ENCODE measurements at regions of chr14 and their contacts with region 1.

Region 1: GRCh38 chr14:66495218-66496098 is 9.3 kb downstream of the CCDC196 start:
- DNase-seq: no peak
- ATAC-seq: peak; percentile 70
- H3K4me3 Mint-ChIP-seq: no peak overlapping the region
- H3K27ac Mint-ChIP-seq: no peak overlapping the region
- H3K4me1 Mint-ChIP-seq: peaks cover 14% of the 10 kb centered on the region
- H3K27me3 Mint-ChIP-seq: no peaks in the 10 kb centered on the region
- CTCF ChIP-seq: peak; percentile 21

Region 2: DNA sequence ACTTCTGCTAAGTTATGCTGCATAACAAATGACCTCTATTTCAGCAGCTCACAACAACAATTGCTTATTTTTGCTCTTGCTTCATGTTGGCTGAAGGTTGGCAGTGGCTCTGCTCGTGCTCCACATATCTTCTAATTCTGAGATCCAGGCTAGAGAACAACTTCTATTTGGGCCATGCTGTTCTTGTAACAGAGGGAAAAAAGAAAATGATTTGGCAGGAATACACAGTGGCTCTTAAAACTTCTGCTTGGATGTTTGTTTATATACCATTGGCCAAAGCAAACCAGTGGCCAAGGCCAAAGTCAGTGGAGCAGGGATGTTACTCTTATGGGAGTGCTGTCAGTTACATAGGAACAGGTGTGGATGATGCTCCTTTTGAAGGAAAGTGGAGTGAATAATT is 44.6 kb after region 1 on chr14:
- CTCF ChIA-PET with region 1: no interaction called
- POLR2A ChIA-PET with region 1: no interaction called
- intact Hi-C with region 1: loop called (anchors 5 kb)
- DNase-seq: no peak
- ATAC-seq: no peak
- H3K4me3 Mint-ChIP-seq: no peak overlapping the region
- H3K27ac Mint-ChIP-seq: no peak overlapping the region
- H3K4me1 Mint-ChIP-seq: peaks cover 9% of the 10 kb centered on the region
- H3K27me3 Mint-ChIP-seq: no peaks in the 10 kb centered on the region
- CTCF ChIP-seq: no peak

Region 3: DNA sequence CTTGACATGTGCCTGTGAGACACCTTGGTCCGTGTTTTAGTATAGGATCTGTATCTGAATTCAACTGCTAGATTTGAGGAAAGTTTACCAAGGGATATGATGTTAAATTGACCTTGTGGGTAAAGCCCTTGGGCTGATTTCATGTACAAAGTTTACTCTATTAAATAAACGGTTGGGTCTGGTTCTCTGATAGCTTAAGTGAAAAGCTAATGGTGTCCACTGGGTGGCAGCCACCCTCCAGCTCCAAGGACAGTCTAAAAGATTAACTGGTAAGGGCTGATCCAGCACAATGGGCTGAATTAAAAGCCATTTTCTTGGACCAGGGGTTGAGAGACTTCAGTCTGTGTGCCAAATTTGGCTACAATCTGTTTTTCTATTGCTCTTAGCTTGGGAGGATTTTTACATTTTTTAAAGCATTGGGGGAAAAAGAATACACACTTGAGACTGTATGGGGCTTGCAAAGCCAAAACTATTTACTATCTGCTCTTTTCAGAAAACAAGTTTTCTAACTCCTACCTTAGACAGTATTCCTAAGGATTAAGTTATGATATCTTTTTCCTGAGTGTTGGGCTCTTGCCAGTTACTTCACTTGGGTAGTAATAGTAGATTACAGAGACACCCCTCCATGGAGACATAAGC is 129.0 kb after region 1 on chr14:
- CTCF ChIA-PET with region 1: interaction called, 6 read pairs
- POLR2A ChIA-PET with region 1: no interaction called
- intact Hi-C with region 1: loop called (anchors 2 kb)
- DNase-seq: no peak
- ATAC-seq: peak; percentile 45
- H3K4me3 Mint-ChIP-seq: no peak overlapping the region
- H3K27ac Mint-ChIP-seq: no peak overlapping the region
- H3K4me1 Mint-ChIP-seq: no peaks in the 10 kb centered on the region
- H3K27me3 Mint-ChIP-seq: no peaks in the 10 kb centered on the region
- CTCF ChIP-seq: no peak

Region 4: GRCh38 chr14:66746316-66747006 is 251.0 kb after region 1 on chr14:
- CTCF ChIA-PET with region 1: interaction called, 4 read pairs
- POLR2A ChIA-PET with region 1: no interaction called
- intact Hi-C with region 1: loop called (anchors 1 kb)
- DNase-seq: no peak
- ATAC-seq: no peak
- H3K4me3 Mint-ChIP-seq: no peak overlapping the region
- H3K27ac Mint-ChIP-seq: no peak overlapping the region
- H3K4me1 Mint-ChIP-seq: no peaks in the 10 kb centered on the region
- H3K27me3 Mint-ChIP-seq: no peaks in the 10 kb centered on the region
- CTCF ChIP-seq: no peak

Region 5: DNA sequence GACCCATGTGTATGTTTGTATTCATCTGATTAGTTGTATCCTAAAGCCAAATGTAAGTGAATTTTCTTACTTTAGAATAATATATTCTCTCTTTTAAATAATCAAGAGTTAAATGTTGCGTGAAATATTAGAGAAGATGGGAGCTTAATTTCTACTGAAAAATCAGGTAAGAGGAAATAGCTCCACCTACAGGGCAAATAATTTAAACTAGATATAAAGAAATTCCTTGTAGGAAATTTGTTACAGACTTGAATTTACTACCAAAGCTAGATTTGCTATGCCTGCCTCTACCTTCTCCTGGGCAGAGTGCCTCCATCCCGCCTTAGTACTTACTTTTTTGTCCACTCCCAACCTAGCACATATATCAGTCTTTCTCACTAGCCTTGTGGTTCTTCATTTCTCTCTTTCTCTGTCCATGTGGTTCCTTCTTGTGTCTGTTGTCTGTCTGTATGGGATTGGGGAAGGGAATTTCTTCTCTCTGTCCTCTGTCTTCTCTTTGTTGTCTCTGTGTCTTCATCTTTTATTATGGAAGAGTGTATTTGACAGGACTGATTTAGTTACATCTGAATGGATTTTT is 790.5 kb after region 1 on chr14:
- CTCF ChIA-PET with region 1: interaction called, 8 read pairs
- POLR2A ChIA-PET with region 1: no interaction called
- intact Hi-C with region 1: loop called (anchors 1 kb)
- DNase-seq: no peak
- ATAC-seq: no peak
- H3K4me3 Mint-ChIP-seq: no peak overlapping the region
- H3K27ac Mint-ChIP-seq: no peak overlapping the region
- H3K4me1 Mint-ChIP-seq: no peaks in the 10 kb centered on the region
- H3K27me3 Mint-ChIP-seq: no peaks in the 10 kb centered on the region
- CTCF ChIP-seq: peak; percentile 40